Mammary epithelial cell (primary cell): ENCODE measurements at regions of chr7 and their contacts with region 1.

Region 1: GRCh38 chr7:83663131-83663530 is 14.2 kb upstream of the SEMA3E start:
- DNase-seq: no peak
- H3K4me3 ChIP-seq: no peak overlapping the region
- H3K27ac ChIP-seq: no peak overlapping the region
- H3K4me1 ChIP-seq: no peaks in the 10 kb centered on the region
- H3K27me3 ChIP-seq: peaks cover 4% of the 10 kb centered on the region
- CTCF ChIP-seq: no peak

Region 2: GRCh38 chr7:83365746-83366145 is 297.4 kb before region 1 on chr7:
- CTCF ChIA-PET with region 1: interaction called, 13 read pairs
- dilution Hi-C with region 1: no loop called
- in situ Hi-C with region 1: no loop called
- intact Hi-C with region 1: no loop called
- DNase-seq: no peak
- H3K4me3 ChIP-seq: no peak overlapping the region
- H3K27ac ChIP-seq: no peak overlapping the region
- H3K4me1 ChIP-seq: no peaks in the 10 kb centered on the region
- H3K27me3 ChIP-seq: peaks cover 4% of the 10 kb centered on the region
- CTCF ChIP-seq: peak in 1 of 2 donors; percentile 35

Region 3: DNA sequence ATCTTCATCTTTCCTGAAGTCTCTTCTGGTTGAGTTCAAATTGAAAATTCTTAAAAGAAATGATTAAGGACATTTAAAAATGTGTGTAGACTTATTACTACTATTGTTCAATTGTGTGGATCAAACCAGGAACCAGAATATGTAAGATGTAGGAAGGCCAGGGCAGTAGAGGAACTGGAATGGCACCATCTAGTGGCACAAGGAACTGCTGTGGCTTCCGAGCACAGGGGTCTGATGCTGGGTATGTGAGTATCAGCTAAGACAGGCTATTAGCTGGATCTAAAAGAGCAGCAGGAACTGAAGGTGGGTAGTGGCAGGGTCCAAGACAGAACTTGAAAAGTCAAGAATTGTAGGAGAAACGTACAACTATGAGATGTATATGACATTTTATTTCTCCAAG is 284.1 kb after region 1 on chr7:
- CTCF ChIA-PET with region 1: no interaction called
- dilution Hi-C with region 1: no loop called
- in situ Hi-C with region 1: no loop called
- intact Hi-C with region 1: no loop called
- DNase-seq: peak; percentile 10
- H3K4me3 ChIP-seq: no peak overlapping the region
- H3K27ac ChIP-seq: no peak overlapping the region
- H3K4me1 ChIP-seq: no peaks in the 10 kb centered on the region
- H3K27me3 ChIP-seq: no peaks in the 10 kb centered on the region
- CTCF ChIP-seq: peak; percentile 45 to 63